GM23248 (cell line): ENCODE measurements at regions of chr2 and their contacts with region 1.

Region 1: DNA sequence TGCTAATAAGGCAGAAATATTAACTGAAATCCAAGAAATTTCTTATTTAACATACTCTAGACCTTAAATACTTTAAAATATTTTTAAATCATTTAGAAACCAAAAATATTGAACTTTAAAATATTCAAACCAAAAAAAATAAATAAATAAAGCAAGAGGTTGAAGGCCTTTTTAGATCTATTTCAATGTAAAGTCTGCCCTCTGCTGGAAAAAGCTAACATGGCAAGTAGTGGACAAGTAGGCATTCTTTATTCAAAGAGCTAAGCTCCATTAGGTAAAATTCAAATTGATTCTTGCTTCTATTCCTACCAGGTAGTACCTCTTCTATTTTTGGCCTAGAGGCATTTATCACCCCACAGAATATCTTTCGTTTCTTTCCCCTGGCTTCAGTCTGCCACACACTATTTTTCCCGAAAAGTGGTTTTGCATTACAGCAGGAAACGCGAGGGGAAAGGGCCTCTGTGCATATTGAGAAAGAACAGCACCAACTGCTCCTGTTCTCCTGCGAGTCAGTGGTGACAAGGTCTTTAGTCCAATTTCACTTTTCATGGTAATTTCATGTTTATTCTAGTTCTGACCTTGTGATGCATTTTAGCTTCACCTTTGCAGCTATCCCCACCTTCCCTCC is 20.4 kb downstream of the IFIH1 start:
- DNase-seq: peak; percentile 68
- H3K4me3 ChIP-seq: peak overlapping the region; percentile 69
- H3K27ac ChIP-seq: no peak overlapping the region
- H3K4me1 ChIP-seq: peaks cover 27% of the 10 kb centered on the region
- H3K27me3 ChIP-seq: no peaks in the 10 kb centered on the region

Region 2: DNA sequence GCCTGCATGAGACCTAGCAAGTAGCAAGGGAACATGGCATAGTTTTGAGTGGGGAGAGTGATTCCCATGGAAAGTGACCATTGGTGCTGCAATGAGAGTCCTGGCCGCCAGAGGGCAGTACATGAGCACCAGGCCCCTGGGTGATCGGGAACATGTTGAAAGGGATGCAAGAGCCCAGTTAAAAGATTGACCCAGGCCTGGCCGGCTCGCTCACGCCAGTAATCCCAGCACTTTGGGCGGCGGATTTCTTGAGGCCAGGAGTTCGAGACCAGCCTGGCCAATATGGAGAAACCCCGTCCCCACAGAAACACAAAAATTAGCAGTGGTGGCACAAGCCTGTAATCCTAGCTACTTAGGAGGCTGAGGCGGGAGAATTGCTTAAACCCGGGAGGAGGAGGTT is 77.0 kb before region 1 on chr2:
- in situ Hi-C with region 1: loop called (anchors 5 kb)
- DNase-seq: peak; percentile 76
- H3K4me3 ChIP-seq: no peak overlapping the region
- H3K27ac ChIP-seq: no peak overlapping the region
- H3K4me1 ChIP-seq: peaks cover 16% of the 10 kb centered on the region
- H3K27me3 ChIP-seq: no peaks in the 10 kb centered on the region

Region 3: GRCh38 chr2:162518894-162519293 is 220.9 kb after region 1 on chr2:
- in situ Hi-C with region 1: no loop called
- DNase-seq: no peak
- H3K4me3 ChIP-seq: no peak overlapping the region
- H3K27ac ChIP-seq: no peak overlapping the region
- H3K4me1 ChIP-seq: no peaks in the 10 kb centered on the region
- H3K27me3 ChIP-seq: no peaks in the 10 kb centered on the region